Activated naive CD8-positive, alpha-beta T cell treated with anti-CD3 and anti-CD28 coated beads, Interleukin-2, amount 10 ng/mL, durations not matched to agents 7 days and 5 days (primary cell): ENCODE measurements at regions of chr3 and their contacts with region 1.

Region 1: GRCh38 chr3:67654099-67654843 is at the start of gene SUCLG2:
- DNase-seq: peak; percentile 83
- ATAC-seq: peak; percentile 62
- H3K4me3 Mint-ChIP-seq: peak within 1 kb of the TSS; percentile 78
- H3K27ac Mint-ChIP-seq: peak within 1 kb of the TSS; percentile 92
- H3K4me1 Mint-ChIP-seq: peaks cover 46% of the 10 kb centered on the region
- H3K27me3 Mint-ChIP-seq: no peaks in the 10 kb centered on the region
- total RNA-seq, gene SUCLG2: 64.0 to 68.2 TPM

Region 2: DNA sequence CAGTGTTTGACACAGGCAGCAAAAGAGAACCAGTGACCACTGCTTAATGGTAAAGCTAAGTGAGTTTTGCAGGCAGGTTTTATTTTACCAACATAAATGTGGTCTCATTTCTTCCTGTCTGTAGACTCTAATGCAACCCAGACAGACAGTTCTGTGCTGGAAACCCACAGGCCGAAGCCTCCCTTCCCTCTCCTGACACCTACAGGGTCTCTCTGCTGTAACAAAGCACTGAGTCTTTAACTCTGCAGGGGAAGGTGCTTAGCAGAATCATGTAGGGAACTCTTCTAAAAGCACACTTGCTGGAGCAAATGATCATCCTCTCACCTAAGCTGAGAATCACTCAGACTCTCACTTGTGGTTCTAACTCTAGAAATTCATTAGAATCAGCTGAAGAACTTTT is 455.9 kb before region 1 on chr3:
- POLR2A ChIA-PET with region 1: no interaction called
- DNase-seq: no peak
- ATAC-seq: no peak
- H3K4me3 Mint-ChIP-seq: no peak overlapping the region
- H3K27ac Mint-ChIP-seq: no peak overlapping the region
- H3K4me1 Mint-ChIP-seq: no peaks in the 10 kb centered on the region
- H3K27me3 Mint-ChIP-seq: no peaks in the 10 kb centered on the region

Region 3: GRCh38 chr3:67601911-67602608 is 52.2 kb before region 1 on chr3:
- POLR2A ChIA-PET with region 1: interaction called, 28 read pairs
- DNase-seq: no peak
- ATAC-seq: peak; percentile 86
- H3K4me3 Mint-ChIP-seq: peak overlapping the region; percentile 83
- H3K27ac Mint-ChIP-seq: peak overlapping the region; percentile 88
- H3K4me1 Mint-ChIP-seq: peaks cover 60% of the 10 kb centered on the region
- H3K27me3 Mint-ChIP-seq: no peaks in the 10 kb centered on the region

Region 4: GRCh38 chr3:67635257-67635656 is 19.0 kb before region 1 on chr3:
- POLR2A ChIA-PET with region 1: no interaction called
- DNase-seq: no peak
- ATAC-seq: no peak
- H3K4me3 Mint-ChIP-seq: no peak overlapping the region
- H3K27ac Mint-ChIP-seq: no peak overlapping the region
- H3K4me1 Mint-ChIP-seq: peaks cover 14% of the 10 kb centered on the region
- H3K27me3 Mint-ChIP-seq: no peaks in the 10 kb centered on the region

Region 5: GRCh38 chr3:67704322-67704721 is 50.1 kb after region 1 on chr3:
- POLR2A ChIA-PET with region 1: no interaction called
- DNase-seq: no peak
- ATAC-seq: no peak
- H3K4me3 Mint-ChIP-seq: no peak overlapping the region
- H3K27ac Mint-ChIP-seq: no peak overlapping the region
- H3K4me1 Mint-ChIP-seq: peaks cover 1% of the 10 kb centered on the region
- H3K27me3 Mint-ChIP-seq: no peaks in the 10 kb centered on the region

Region 6: GRCh38 chr3:67828486-67829010 is 174.3 kb after region 1 on chr3:
- POLR2A ChIA-PET with region 1: no interaction called
- DNase-seq: no peak
- ATAC-seq: no peak
- H3K4me3 Mint-ChIP-seq: no peak overlapping the region
- H3K27ac Mint-ChIP-seq: no peak overlapping the region
- H3K4me1 Mint-ChIP-seq: no peaks in the 10 kb centered on the region
- H3K27me3 Mint-ChIP-seq: no peaks in the 10 kb centered on the region